GM13976 (cell line): ENCODE measurements at regions of chr11 and their contacts with region 1.

Region 1: DNA sequence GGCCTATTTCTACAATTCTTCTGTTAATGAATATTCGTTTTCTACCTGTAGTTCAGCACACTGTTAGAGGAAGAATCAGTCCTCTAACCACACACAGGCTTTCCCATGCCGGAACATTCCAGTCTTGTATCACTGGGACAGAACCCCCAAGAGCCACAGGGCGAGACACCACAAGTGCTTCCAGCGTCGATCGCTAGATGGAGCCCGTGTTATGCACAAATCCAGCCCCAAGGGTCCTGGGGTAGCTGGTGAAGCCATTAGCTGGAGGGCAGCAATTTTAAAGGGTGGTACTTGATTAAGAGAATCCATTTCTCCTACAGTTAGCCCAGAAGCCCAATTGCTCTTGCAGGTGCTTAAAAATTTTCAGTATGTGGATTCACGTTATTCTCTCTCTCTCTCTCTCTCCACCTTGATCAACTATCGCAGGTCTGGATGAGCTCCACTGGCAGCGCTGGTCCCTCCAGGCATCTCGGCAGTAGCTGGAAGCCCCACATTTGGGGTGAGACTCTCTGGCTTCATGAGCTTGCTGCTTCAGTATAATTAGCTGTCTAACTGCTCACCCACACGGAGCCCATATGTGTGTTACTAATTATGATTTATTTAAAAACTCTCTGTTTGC is 148.2 kb upstream of the SNX19 start:
- DNase-seq: peak; percentile 69
- CTCF ChIP-seq: peak; percentile 88

Region 2: GRCh38 chr11:131418189-131418588 is 353.7 kb after region 1 on chr11:
- in situ Hi-C with region 1: no loop called
- DNase-seq: no peak
- CTCF ChIP-seq: no peak

Region 3: DNA sequence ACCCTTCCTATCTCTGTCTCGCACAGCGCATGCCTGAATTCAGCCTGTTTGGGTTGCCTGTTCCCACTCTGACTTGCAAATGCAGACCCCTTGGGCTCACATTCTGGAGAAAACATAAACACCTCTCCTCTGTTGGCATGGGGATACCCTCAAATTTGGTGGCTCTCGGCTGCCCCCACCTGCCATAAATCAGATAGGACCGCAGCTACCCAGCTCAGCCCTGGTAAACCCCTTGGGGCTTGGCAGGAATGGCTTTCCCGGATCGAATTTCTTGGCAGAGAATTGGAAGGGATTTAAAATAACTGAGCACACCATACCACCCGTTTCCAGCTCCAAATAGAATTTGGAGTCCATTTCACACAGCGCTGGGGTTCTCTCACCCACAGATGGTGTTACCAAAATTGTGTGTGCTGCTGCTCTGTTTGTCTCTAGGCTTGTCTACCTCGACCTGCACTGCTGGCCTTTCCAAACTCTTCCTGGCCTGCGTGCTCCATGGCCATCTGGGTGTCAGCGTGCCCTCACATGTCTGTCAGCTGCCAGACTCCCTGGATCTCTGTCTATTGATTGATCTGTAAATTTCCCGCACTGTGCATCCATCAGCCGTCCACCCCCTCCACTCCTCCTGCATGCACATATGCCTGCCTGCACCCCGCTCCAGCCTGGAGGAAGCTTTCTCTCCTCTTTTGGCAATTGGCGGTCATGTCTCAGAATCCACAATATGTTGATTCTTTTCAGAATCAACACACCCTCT is 439.9 kb after region 1 on chr11:
- in situ Hi-C with region 1: loop called (anchors 10 kb)
- DNase-seq: no peak
- CTCF ChIP-seq: no peak